SK-N-SH (cell line): ENCODE measurements at regions of chr11 and their contacts with region 1.

Region 1: DNA sequence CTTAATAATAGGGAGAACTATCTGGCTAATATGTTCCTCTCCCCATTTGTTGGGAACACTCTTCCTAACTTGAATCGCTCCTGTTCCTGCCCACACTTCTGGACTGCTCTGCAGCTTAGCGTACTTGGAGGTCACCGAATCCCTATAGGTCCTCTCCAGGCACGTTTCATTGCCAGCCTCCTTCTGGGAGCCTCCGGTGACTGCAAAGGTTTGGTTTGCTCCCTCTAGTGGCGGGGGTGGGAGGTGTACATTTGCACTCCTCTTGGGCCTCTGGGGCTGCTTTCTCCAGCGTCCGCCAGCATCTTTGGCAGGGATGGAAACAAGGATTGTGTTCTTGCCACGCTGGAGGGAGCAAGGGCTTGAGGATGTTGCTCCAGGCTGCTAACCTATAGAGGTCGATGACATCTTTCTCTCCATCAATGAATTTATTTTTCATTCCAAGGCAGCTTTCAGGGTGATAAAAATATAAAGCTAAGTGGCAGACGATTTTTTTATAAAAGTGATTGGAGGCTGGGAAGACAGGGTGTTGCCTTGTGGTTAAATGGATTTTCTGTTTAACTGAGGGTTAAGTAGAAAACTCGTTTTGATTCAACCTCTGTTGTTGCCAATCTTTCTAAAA is 48.7 kb downstream of the TSPAN18 start:
- DNase-seq: peak; percentile 53
- H3K4me3 ChIP-seq: no peak overlapping the region
- H3K27ac ChIP-seq: peak overlapping the region in 1 of 2 experiments; percentile 99; a peak in 3 of 4 replicates
- H3K4me1 ChIP-seq: peaks cover 21 to 77% of the 10 kb centered on the region in 2 experiments; a peak in 3 of 4 replicates
- H3K27me3 ChIP-seq: no peaks in the 10 kb centered on the region
- CTCF ChIP-seq: peak; percentile 74
- EP300 ChIP-seq: no peak
- RAD21 ChIP-seq: peak; percentile 50

Region 2: GRCh38 chr11:44727373-44728287 is 47.8 kb before region 1 on chr11:
- CTCF ChIA-PET with region 1: interaction called, 32 read pairs
- POLR2A ChIA-PET with region 1: interaction called, 4 read pairs
- DNase-seq: peak; percentile 92
- H3K4me3 ChIP-seq: peak overlapping the region; percentile 61 to 62
- H3K27ac ChIP-seq: peak overlapping the region in 1 of 2 experiments; percentile 92; a peak in 2 of 4 replicates
- H3K4me1 ChIP-seq: peaks cover 5 to 56% of the 10 kb centered on the region in 2 experiments; a peak in 3 of 4 replicates
- H3K27me3 ChIP-seq: peaks cover 25% of the 10 kb centered on the region; the same call in 1 of the 2 replicates
- CTCF ChIP-seq: peak; percentile 80
- EP300 ChIP-seq: no peak
- RAD21 ChIP-seq: peak; percentile 85

Region 3: DNA sequence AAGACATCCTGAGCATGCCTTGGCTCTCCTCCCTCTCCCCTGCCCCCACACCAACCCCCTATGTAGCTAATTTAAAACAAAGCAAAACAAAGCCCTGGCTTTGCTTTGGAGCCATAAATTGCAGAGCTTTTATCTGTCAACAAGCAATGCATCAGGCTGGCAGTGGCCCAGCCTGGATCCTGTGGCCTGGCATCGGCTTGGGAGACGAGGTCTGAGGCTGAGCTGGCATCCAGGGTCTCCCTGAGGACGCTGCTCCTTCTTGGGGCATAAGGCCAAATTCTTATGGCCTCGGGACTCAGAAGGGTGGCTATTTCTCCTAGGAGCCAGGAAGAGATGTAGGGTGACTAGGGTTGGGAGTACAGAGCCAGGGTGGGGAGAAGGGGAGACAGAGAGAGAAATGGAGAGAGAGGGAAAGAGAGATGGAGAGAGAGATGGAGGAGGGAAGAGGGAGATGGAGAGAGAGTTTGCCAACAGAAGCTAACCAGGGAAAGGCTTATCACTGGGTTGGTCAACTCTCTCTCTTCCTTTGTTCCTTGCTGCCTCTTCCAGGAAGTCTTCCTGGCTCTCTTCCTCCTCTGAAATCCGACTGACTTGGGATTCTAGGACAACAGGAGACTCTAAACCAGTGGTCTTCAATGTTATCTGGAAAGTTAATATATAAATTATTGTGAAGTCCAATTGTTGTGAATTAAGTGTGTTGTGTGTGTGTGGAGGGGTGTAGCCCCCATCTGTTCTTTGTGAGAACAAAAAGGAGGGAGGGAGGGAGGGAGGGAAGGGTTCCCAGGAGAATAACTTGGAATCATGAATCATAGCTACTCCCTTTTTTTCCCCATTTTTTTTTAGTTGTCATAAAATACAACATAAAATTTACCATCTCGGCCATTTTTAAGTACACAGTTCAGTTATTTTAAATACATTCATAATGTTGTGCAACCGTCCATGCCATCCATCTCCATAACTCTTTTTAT is 19.6 kb before region 1 on chr11:
- CTCF ChIA-PET with region 1: interaction called, 101 read pairs
- POLR2A ChIA-PET with region 1: interaction called, 43 read pairs
- DNase-seq: peak; percentile 42
- H3K4me3 ChIP-seq: no peak overlapping the region; a peak in 1 of 4 replicates
- H3K27ac ChIP-seq: peak overlapping the region; percentile 23 to 100; a peak in 3 of 4 replicates
- H3K4me1 ChIP-seq: peaks cover 16 to 53% of the 10 kb centered on the region in 2 experiments; a peak in 3 of 4 replicates
- H3K27me3 ChIP-seq: no peaks in the 10 kb centered on the region; the same call in 1 of the 2 replicates
- CTCF ChIP-seq: no peak
- EP300 ChIP-seq: peak; percentile 55 to 58; a peak in 2 of 4 replicates
- RAD21 ChIP-seq: peak; percentile 34; the same call in 1 of the 2 replicates

Region 4: DNA sequence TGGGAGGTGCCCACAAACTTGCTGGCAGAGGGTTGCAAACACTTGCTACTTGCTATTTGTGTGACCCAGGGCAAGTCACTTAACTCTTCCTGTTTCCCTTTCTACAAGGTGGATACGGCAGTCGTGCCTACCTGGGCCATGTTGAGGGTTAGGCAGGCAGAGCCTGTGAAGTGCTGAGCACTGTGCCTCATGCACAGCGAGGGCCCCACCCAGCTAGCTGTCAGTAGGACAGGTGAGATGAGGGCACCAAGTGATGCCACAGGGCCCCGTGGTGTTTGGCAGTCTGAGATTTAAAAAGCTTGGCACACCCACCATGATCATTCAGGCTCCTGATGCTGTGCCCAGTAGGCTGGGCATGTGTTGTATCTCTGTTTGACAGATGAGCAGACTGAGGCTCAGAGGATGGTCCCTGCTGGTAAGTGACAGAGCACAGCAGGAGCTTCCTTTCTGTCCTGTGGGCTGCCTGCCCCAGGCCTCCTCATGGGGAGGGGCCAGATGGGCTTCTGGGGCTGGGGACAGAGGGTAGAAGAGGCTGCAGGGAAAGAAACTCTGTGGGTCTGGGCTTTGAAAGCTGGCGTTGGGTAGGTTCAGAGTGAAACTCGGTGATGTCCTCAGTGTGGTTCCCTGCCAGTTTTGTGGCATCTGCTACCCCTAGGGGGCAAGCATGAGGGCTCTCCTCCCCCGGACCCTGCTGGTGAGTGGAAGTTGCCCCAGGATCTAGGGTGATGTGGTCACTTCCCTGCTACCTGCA is 10.6 kb after region 1 on chr11:
- CTCF ChIA-PET with region 1: interaction called, 14 read pairs
- POLR2A ChIA-PET with region 1: interaction called, 3 read pairs
- DNase-seq: peak; percentile 66
- H3K4me3 ChIP-seq: no peak overlapping the region
- H3K27ac ChIP-seq: peak overlapping the region in 1 of 2 experiments; percentile 85; a peak in 2 of 4 replicates
- H3K4me1 ChIP-seq: peaks cover 12 to 39% of the 10 kb centered on the region in 2 experiments; a peak in 3 of 4 replicates
- H3K27me3 ChIP-seq: no peaks in the 10 kb centered on the region; the same call in 1 of the 2 replicates
- CTCF ChIP-seq: no peak
- EP300 ChIP-seq: 0 out of 4 replicates have a peak, but pooled peaks of 1 of the 2 experiments have one; percentile 17
- RAD21 ChIP-seq: no peak

Region 5: GRCh38 chr11:44911029-44911814 is 135.7 kb after region 1 on chr11:
- CTCF ChIA-PET with region 1: interaction called, 11 read pairs
- POLR2A ChIA-PET with region 1: no interaction called
- DNase-seq: peak; percentile 83
- H3K4me3 ChIP-seq: no peak overlapping the region; a peak in 1 of 4 replicates
- H3K27ac ChIP-seq: no peak overlapping the region; a peak in 1 of 4 replicates
- H3K4me1 ChIP-seq: peaks cover 0 to 10% of the 10 kb centered on the region in 2 experiments; a peak in 1 of 4 replicates
- H3K27me3 ChIP-seq: 0 out of 2 replicates have a peak, but pooled peaks cover 5% of the 10 kb centered on the region
- CTCF ChIP-seq: peak; percentile 87
- EP300 ChIP-seq: no peak
- RAD21 ChIP-seq: peak; percentile 83